WTC11 (cell line): ENCODE measurements at regions of chr10 and their contacts with region 1.

Region 1: DNA sequence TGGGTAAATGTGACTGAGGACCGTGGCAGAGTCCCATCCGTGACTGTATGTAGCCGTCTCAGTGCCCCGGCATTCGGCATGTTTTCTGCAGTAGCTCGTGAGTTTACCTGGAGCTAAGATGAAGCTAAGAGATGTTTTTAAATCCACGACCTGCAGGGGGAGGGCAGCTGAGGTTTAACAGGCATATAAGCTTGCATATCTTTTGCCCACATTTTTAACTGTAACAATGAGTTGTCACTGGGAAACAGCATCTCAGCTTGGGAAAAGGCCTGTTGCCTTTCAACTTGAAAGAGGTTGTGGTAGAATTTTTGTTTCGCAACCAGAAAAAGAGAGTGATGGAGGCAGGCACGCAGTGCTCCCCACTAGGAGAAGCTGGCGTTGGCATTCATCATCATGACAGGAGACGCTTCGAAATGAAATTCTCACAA is 77.7 kb downstream of the CELF2 start:
- DNase-seq: peak; percentile 21
- ATAC-seq: peak; percentile 58
- H3K4me3 Mint-ChIP-seq: peak overlapping the region; percentile 28
- H3K27ac Mint-ChIP-seq: peak overlapping the region; percentile 66
- H3K4me1 Mint-ChIP-seq: peaks cover 53% of the 10 kb centered on the region
- H3K27me3 Mint-ChIP-seq: 0 out of 2 replicates have a peak, but pooled peaks cover 3% of the 10 kb centered on the region
- CTCF ChIP-seq: no peak

Region 2: GRCh38 chr10:11036407-11037011 is 58.9 kb before region 1 on chr10:
- CTCF ChIA-PET with region 1: interaction called, 10 read pairs
- POLR2A ChIA-PET with region 1: no interaction called
- DNase-seq: peak; percentile 42
- ATAC-seq: peak; percentile 82
- H3K4me3 Mint-ChIP-seq: no peak overlapping the region
- H3K27ac Mint-ChIP-seq: peak overlapping the region; percentile 5; the same call in 1 of the 2 replicates
- H3K4me1 Mint-ChIP-seq: peaks cover 50% of the 10 kb centered on the region
- H3K27me3 Mint-ChIP-seq: no peaks in the 10 kb centered on the region
- CTCF ChIP-seq: peak; percentile 45

Region 3: DNA sequence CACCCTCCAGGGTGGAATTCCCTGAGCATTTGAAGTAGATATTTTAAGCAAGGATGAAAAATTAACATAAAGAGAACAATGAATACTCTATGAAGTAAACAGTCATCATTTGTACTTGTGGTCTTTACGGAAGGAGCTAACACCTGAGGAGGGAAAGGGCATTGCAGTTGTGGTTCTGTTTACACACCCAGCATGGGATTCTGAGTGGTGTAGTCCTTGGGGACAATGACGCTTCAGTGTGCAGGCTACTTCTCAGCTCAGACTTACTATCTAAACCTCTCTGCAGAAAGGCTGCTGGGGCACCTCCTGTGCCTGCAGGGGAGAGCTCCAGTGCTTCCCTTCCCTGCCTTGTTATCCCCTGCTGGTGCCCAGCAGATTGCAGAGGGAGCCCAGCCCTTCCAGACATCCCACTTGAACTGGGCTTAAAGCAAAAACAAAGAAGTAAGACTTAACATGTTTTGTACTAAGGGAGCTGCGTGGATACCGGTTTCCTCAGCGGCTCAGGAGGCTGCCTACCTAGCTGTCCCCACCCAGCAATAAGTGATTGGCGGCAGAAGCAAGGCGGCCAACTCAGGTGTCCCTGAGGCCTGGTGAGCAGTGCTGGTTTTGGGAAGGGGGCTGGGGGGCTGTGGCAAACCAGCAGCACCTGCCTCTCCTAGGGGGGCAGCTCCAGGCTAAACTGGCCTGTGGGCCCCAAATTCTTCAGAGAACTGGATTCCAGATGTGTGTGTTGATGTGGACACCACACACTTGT is 11.4 kb after region 1 on chr10:
- CTCF ChIA-PET with region 1: interaction called, 19 read pairs
- POLR2A ChIA-PET with region 1: no interaction called
- DNase-seq: no peak
- ATAC-seq: peak; percentile 62
- H3K4me3 Mint-ChIP-seq: no peak overlapping the region
- H3K27ac Mint-ChIP-seq: peak overlapping the region; percentile 47; the same call in 1 of the 2 replicates
- H3K4me1 Mint-ChIP-seq: peaks cover 44% of the 10 kb centered on the region
- H3K27me3 Mint-ChIP-seq: no peaks in the 10 kb centered on the region
- CTCF ChIP-seq: no peak

Region 4: GRCh38 chr10:11145495-11145855 is 50.1 kb after region 1 on chr10:
- CTCF ChIA-PET with region 1: interaction called, 14 read pairs
- POLR2A ChIA-PET with region 1: no interaction called
- DNase-seq: no peak
- ATAC-seq: peak; percentile 51
- H3K4me3 Mint-ChIP-seq: no peak overlapping the region
- H3K27ac Mint-ChIP-seq: peak overlapping the region; percentile 86
- H3K4me1 Mint-ChIP-seq: peaks cover 88% of the 10 kb centered on the region
- H3K27me3 Mint-ChIP-seq: no peaks in the 10 kb centered on the region
- CTCF ChIP-seq: no peak

Region 5: DNA sequence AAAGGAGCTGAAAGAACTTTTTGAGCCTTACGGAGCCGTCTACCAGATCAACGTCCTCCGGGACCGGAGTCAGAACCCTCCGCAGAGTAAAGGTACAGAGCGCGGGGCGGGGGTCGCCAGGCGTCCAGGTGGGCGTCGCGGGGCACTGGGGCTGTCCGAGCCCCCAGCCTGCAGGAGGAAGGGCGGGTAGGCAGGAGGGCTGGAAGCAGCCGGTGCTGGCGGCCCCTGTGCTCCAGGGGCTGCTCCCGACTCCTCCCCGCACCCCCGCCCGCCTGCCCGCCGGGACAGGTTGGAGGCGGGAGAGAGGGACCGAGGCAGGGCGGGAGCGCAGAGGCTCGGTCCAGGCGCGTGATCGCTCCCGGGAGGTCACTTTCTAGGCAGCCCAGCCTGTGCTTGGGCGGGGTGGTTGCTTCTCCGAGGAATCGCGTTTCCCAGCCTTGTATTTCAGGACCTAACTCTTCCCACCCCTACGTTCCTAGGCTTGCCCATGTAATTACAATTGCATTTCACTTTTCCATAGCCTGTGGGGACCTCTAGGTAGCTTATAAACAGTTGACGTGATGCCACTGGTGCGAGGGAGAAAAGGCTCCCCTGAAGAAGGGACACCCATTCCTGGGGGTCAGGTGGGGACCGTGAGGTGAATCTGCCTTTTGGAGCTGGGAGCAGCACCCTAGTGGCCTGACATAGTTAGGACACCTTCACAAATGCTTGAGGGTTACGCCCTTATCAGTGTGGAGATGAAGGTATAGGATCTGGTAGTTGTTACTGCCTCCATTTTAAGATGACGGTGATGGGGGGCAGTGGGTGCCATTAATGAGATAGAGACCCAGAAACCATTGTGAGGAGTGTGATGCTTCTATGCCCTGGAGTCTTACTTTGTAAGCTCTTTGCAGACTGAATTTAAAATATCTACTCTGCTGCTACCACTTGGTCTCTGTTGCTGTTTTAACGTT is 70.5 kb after region 1 on chr10:
- CTCF ChIA-PET with region 1: interaction called, 20 read pairs
- POLR2A ChIA-PET with region 1: no interaction called
- DNase-seq: peak; percentile 66
- ATAC-seq: peak; percentile 87
- H3K4me3 Mint-ChIP-seq: peak overlapping the region; percentile 90
- H3K27ac Mint-ChIP-seq: no peak overlapping the region
- H3K4me1 Mint-ChIP-seq: peaks cover 32% of the 10 kb centered on the region
- H3K27me3 Mint-ChIP-seq: peaks cover 5% of the 10 kb centered on the region
- CTCF ChIP-seq: peak; percentile 54